Adrenal gland (tissue), 19 donors: ENCODE measurements at regions of chr22 and their contacts with region 1.

Region 1: DNA sequence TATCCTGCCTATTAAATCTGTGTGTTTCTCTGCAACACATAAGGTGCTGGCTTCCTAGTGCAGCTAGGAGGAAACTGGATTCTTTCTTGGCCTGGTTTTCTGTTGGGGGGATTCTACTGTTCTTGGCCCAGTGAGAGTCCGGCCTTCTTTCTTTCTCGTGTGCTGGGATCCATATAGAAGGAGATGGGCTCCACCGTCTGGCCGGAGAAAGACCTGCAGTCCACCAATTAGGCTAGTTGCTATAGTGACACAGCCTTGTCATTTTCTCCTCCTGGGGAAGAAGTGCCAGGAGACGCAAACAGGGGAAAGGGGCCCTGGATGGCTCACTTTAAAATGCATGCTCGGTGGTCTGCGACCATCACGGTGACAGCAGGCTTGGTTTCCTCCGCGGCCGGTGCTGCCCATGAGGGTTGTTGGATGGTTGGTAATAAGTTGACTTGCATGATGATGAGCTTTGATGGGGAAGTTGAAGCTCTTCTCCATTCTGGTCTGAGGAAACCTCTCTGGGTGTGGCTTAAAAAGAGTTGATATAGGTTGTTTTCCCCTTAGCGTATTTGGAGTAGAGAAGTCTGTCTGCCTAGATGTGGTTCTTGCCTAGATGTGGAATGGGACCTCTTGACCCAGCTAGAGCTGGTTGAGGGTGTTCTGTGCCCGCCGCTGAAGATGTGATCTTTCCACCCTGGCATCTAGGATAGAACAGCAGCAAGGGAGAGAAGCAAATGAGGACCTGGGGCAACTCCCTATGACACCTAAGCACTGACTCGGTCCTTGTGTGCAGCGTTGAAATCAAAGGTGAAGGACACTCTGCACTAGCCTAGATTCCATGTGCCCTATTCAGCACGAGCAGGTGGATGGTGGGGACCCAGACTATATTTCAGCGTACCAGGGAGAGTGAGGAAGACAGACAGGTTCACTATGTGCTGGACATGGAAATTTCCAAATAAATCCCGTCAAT is 1335.0 kb downstream of the BRD1 start:
- DNase-seq: peak; percentile 47 to 84 (median 71)
- H3K4me3 ChIP-seq: no peak overlapping the region
- H3K27ac ChIP-seq: no peak overlapping the region
- H3K4me1 ChIP-seq: no peaks in the 10 kb centered on the region
- H3K27me3 ChIP-seq: peaks cover 33% of the 10 kb centered on the region
- CTCF ChIP-seq: peak; percentile 62 to 79 (median 74)
- POLR2A ChIP-seq: no peak

Region 2: DNA sequence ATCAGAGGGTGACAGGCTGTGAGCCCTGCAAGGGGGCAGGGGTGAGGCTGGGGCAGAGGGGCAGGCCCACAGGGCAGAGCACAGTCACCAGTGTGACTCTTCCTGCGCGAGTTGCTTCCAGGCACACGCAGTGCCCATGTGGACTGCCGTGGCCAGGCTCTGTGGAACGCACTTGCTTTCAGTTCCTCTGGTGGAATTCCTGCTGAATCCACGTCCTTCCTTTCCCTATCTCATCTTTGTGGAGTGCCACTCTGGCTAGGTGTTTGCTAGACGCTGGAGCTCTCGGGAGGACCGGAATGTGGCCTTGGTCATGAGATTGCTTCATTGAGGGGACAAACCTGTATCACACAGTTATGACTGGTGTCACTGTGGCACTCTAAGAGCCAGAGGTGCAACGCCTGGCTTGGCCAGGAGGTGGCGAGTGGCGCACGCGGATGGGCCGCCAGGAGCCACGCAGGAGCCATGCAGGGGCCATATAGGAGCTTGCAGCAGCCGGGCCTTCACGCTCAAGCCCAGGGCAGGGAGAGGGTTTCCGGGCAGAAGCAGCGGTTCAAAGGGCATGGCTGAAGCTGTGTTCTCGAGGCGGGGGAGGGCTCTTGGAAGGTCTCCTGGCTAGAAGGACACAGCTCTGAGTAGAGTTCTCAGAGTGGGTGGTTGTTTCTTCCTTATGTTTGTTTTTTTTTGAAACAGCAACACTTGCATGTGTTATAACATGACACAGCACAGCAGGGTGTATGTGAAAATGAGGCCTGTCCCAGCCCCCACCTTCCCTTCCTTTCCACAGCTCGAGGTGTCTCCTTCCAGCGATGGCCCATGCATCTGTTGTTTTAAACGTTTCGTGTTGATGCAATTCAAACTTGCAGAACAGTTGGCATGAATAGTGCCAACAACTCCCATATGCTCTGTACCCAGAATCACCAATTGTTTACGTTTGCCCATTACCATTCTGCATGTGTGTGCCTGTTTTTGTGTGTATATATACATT is 1694.0 kb before region 1 on chr22:
- intact Hi-C with region 1: loop called in 1 of 2 experiments (anchors 5 kb)
- DNase-seq: peak; percentile 76 to 93 (median 84)
- H3K4me3 ChIP-seq: no peak overlapping the region
- H3K27ac ChIP-seq: peak overlapping the region in 2 of 5 donors; percentile 17 to 72
- H3K4me1 ChIP-seq: peaks cover 0 to 12% of the 10 kb centered on the region in 2 donors
- H3K27me3 ChIP-seq: no peaks in the 10 kb centered on the region
- CTCF ChIP-seq: peak; percentile 91 to 97 (median 94)
- POLR2A ChIP-seq: no peak

Region 3: GRCh38 chr22:47213571-47214230 is 1278.9 kb before region 1 on chr22:
- intact Hi-C with region 1: loop called in 1 of 2 experiments (anchors 10 kb)
- DNase-seq: peak in 3 of 7 donors; percentile 45 to 60 (median 46)
- H3K4me3 ChIP-seq: no peak overlapping the region
- H3K27ac ChIP-seq: no peak overlapping the region
- H3K4me1 ChIP-seq: no peaks in the 10 kb centered on the region
- H3K27me3 ChIP-seq: no peaks in the 10 kb centered on the region
- CTCF ChIP-seq: peak; percentile 32 to 58 (median 50)
- POLR2A ChIP-seq: no peak

Region 4: DNA sequence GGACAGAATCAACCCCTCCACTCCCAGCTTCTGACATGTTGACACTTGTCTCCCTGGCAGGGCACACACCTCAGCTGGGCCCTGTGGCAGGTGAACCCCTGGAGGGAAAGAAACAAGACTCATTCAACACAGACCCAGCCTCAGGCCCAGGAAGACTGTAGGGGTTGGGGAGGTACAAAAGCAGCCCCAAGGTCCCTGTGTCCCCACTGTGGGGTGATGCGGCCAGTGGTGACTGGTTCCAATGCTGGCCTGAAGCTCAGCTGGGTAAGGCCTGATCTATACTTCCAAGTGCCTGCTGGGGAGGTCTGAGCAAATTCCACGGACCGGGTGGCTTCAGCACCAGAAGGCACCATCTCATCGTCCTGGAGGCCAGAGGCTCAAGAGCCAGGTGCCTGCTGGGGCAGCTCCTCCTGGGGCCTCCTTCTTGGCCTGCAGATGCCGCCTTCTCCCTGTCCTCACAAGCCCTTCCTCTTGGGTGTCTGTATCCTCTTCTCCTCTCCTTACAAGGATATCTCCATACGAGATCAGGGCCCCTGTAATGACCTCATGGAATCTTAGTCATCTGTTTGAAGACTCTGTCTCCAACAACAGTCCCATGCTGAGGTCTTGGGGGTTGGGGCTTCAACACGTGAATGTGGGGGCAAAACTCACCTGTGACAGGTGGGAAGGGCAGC is 157.1 kb before region 1 on chr22:
- intact Hi-C with region 1: no loop called
- DNase-seq: no peak
- H3K4me3 ChIP-seq: no peak overlapping the region
- H3K27ac ChIP-seq: no peak overlapping the region
- H3K4me1 ChIP-seq: no peaks in the 10 kb centered on the region
- H3K27me3 ChIP-seq: peaks cover 11% of the 10 kb centered on the region
- CTCF ChIP-seq: no peak
- POLR2A ChIP-seq: no peak

Region 5: GRCh38 chr22:48416586-48417224 is 75.9 kb before region 1 on chr22:
- intact Hi-C with region 1: no loop called
- DNase-seq: no peak
- H3K4me3 ChIP-seq: no peak overlapping the region
- H3K27ac ChIP-seq: no peak overlapping the region
- H3K4me1 ChIP-seq: no peaks in the 10 kb centered on the region
- H3K27me3 ChIP-seq: no peaks in the 10 kb centered on the region
- CTCF ChIP-seq: no peak
- POLR2A ChIP-seq: no peak

Region 6: DNA sequence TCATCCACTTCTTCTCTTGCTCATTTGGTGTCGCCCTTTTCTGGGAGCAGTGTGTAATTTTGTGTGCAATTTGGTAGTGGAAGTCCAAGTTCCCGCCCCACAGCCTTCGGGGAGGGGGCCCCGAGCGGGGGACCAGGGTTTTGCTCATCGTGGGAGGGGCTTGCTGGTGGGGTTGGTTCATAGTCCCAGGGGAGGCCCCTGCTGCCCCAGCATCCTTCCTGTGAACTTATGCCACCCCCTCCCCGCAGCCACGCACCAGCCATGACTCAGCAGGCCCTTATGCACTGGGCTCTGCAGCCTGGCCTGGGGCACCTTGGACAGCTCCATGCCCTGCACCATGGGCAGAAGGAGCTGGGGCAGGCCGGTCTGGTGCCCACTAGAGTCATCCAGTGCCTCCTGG is 151.5 kb after region 1 on chr22:
- intact Hi-C with region 1: no loop called
- DNase-seq: no peak
- H3K4me3 ChIP-seq: no peak overlapping the region
- H3K27ac ChIP-seq: no peak overlapping the region
- H3K4me1 ChIP-seq: no peaks in the 10 kb centered on the region
- H3K27me3 ChIP-seq: no peaks in the 10 kb centered on the region
- CTCF ChIP-seq: no peak
- POLR2A ChIP-seq: no peak